Activated CD4-positive, alpha-beta T cell treated with anti-CD3 and anti-CD28 coated beads for 36 hours (primary cell): ENCODE measurements at regions of chr10 and their contacts with region 1.

Region 1: DNA sequence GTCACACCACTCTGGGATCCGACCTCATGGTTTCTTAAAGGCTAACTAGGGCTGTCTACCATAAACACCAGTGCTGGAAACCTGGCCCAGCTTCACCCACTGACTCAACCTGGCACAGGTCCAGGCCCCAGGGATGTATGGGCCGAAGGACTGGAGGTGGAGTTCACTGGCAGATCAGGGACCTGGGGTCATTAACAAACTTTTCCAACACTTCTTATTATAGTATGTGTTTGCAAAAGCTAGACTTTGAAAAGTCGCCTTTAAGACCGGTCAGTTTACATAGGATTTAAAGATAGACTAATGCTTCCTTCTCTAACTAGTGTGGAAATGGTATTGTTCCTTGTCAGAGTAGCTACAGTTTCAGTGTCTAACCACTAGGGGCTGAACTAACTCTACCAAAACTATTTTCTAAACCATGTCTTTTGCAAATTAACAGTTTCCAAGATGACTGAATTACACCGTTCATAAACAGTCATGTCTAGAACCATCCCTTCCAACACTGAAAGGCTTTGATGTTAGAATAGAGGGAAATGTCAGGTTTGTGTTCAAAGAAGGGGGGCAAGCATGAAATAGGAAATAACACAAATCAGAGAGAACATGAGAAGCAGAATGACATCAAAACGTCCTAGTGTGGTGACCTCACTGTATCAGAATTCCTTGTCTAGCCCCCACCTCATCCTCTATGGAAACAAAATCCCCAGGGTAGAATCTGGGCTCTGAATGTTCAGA is 29.7 kb downstream of the STN1 start:
- DNase-seq: peak; percentile 57
- ATAC-seq: peak; percentile 82
- H3K4me3 Mint-ChIP-seq: no peak overlapping the region
- H3K27ac Mint-ChIP-seq: peak overlapping the region; percentile 83
- H3K4me1 Mint-ChIP-seq: peaks cover 35% of the 10 kb centered on the region
- H3K27me3 Mint-ChIP-seq: no peaks in the 10 kb centered on the region

Region 2: GRCh38 chr10:103872137-103872931 is 15.9 kb before region 1 on chr10:
- CTCF ChIA-PET with region 1: interaction called, 27 read pairs
- POLR2A ChIA-PET with region 1: no interaction called
- intact Hi-C with region 1: no loop called
- DNase-seq: no peak
- ATAC-seq: no peak
- H3K4me3 Mint-ChIP-seq: no peak overlapping the region
- H3K27ac Mint-ChIP-seq: no peak overlapping the region
- H3K4me1 Mint-ChIP-seq: no peaks in the 10 kb centered on the region
- H3K27me3 Mint-ChIP-seq: no peaks in the 10 kb centered on the region

Region 3: DNA sequence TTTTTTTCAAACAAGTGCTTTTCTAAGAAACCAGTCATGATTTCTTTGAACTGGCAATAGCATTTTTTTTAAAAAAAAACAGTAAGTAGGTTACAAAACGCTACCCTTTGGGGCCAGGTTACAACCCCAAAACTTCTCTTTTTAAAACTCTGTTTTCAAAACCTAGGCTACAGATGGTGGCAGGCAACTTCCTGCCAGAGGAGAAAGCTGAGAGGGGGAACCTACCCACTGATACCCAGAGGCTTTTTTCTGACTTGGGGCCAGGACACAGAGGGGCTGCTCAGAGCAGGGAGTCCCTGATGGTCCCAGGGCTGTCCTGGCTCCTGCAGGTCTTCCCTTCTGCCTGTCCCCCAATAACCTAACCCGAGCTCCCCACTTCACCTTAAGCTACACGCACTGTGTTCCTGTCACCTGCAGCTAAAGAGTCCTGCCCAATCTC is 22.8 kb after region 1 on chr10:
- CTCF ChIA-PET with region 1: interaction called, 24 read pairs
- POLR2A ChIA-PET with region 1: no interaction called
- intact Hi-C with region 1: loop called (anchors 1 kb)
- DNase-seq: peak; percentile 49
- ATAC-seq: peak; percentile 42
- H3K4me3 Mint-ChIP-seq: peak overlapping the region; percentile 57
- H3K27ac Mint-ChIP-seq: peak overlapping the region; percentile 98
- H3K4me1 Mint-ChIP-seq: peaks cover 70% of the 10 kb centered on the region
- H3K27me3 Mint-ChIP-seq: no peaks in the 10 kb centered on the region

Region 4: GRCh38 chr10:103983367-103983911 is 95.2 kb after region 1 on chr10:
- CTCF ChIA-PET with region 1: interaction called, 3 read pairs
- POLR2A ChIA-PET with region 1: no interaction called
- intact Hi-C with region 1: loop called in 1 of 2 experiments (anchors 5 kb)
- DNase-seq: no peak
- ATAC-seq: peak; percentile 91
- H3K4me3 Mint-ChIP-seq: peak overlapping the region; percentile 39
- H3K27ac Mint-ChIP-seq: peak overlapping the region; percentile 83
- H3K4me1 Mint-ChIP-seq: peaks cover 70% of the 10 kb centered on the region
- H3K27me3 Mint-ChIP-seq: no peaks in the 10 kb centered on the region

Region 5: DNA sequence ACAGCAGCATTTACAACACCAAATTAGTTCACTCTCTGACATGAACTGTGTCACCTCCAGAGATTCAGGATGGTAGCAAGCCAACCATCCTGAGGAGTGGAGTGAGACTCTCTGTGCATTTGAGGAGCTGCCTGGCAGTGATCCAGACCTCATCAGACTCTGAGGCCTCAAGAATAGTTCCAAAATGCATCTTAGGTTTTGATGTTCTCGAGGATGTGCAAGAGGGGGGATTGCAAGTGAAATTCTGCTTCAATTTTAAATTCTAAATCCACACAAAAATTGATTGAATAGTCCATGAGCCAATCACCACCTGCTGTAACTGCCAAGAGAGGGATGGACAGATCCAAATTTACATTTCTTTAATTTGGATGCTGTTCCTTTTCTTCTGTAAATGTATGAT is 128.4 kb after region 1 on chr10:
- CTCF ChIA-PET with region 1: interaction called, 11 read pairs
- POLR2A ChIA-PET with region 1: interaction called, 3 read pairs
- intact Hi-C with region 1: loop called in 1 of 2 experiments (anchors 2 kb)
- DNase-seq: no peak
- ATAC-seq: no peak
- H3K4me3 Mint-ChIP-seq: no peak overlapping the region
- H3K27ac Mint-ChIP-seq: no peak overlapping the region
- H3K4me1 Mint-ChIP-seq: peaks cover 21% of the 10 kb centered on the region
- H3K27me3 Mint-ChIP-seq: no peaks in the 10 kb centered on the region

Region 6: DNA sequence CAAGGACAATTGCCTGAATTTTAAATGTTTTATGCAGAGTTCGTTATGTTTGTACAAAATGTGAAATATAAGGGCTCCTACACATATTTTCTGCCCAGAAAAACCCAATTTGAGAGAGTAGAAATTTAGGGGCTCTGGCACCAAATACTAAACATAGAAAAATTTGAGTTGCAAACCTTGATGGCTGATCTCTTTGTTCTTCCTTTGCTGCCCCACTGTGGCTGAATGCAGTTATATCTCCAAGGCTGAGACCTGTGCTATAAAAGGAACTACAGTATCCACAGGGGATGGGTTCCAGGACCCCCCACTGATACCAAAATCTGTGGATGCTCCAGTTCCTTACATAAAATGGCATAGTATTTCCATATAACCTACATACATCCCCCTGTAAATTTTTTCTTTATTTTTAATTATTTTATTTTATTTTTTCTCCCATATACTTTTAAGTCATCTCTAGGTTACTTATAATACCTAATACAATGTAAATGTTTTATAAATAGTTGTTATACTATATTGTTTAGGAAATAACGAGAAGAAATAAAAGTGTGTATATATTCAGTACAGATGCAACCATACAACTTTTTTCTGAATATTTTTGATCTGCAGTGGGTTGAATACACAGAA is 321.4 kb after region 1 on chr10:
- CTCF ChIA-PET with region 1: interaction called, 7 read pairs
- POLR2A ChIA-PET with region 1: no interaction called
- intact Hi-C with region 1: loop called (anchors 1 kb)
- DNase-seq: peak; percentile 58
- ATAC-seq: peak; percentile 42
- H3K4me3 Mint-ChIP-seq: no peak overlapping the region
- H3K27ac Mint-ChIP-seq: no peak overlapping the region
- H3K4me1 Mint-ChIP-seq: no peaks in the 10 kb centered on the region
- H3K27me3 Mint-ChIP-seq: peaks cover 9% of the 10 kb centered on the region